Prostate gland (tissue), 2 donors: ENCODE measurements at regions of chr1 and their contacts with region 1.

Region 1: DNA sequence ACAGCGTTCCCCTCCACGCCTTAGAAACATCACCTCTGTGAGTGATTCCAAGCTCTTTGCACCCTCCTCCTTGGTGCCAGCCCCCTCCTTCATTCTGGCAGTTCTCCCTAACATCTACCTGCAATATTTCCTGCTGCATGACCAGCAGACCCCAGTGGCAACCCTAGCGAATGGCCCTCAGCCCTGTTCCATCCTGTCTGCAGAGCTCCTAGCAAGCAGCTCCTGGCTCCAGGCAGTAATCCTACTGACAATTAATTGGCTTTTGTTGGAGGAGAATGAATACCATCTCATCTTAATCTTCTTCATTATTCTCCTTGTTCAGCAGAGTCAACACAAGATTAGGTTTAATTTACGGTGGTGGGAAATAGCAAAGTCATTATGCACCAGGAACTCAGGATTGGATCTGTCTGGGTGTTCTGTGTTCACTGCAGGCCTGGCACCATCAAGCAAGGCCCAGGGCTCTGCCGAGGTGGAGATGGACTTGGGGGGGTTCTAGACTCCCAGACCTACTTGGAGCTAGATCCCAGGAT is 12.4 kb downstream of the FBXO2 start:
- DNase-seq: no peak
- H3K4me3 ChIP-seq: no peak overlapping the region
- H3K27ac ChIP-seq: no peak overlapping the region
- H3K4me1 ChIP-seq: no peaks in the 10 kb centered on the region
- H3K27me3 ChIP-seq: no peaks in the 10 kb centered on the region
- CTCF ChIP-seq: no peak
- POLR2A ChIP-seq: no peak

Region 2: GRCh38 chr1:11037740-11038182 is 604.1 kb before region 1 on chr1:
- intact Hi-C with region 1: loop called (anchors 2 kb)
- DNase-seq: peak; percentile 85
- H3K4me3 ChIP-seq: no peak overlapping the region
- H3K27ac ChIP-seq: no peak overlapping the region
- H3K4me1 ChIP-seq: no peaks in the 10 kb centered on the region
- H3K27me3 ChIP-seq: no peaks in the 10 kb centered on the region
- CTCF ChIP-seq: peak; percentile 77 to 96 (median 92)
- POLR2A ChIP-seq: no peak

Region 3: GRCh38 chr1:11594222-11594621 is 47.6 kb before region 1 on chr1:
- intact Hi-C with region 1: no loop called
- DNase-seq: no peak
- H3K4me3 ChIP-seq: no peak overlapping the region
- H3K27ac ChIP-seq: no peak overlapping the region
- H3K4me1 ChIP-seq: no peaks in the 10 kb centered on the region
- H3K27me3 ChIP-seq: no peaks in the 10 kb centered on the region
- CTCF ChIP-seq: no peak
- POLR2A ChIP-seq: no peak